Heart left ventricle (tissue), 16 donors: ENCODE measurements at regions of chr4 and their contacts with region 1.

Region 1: GRCh38 chr4:138680989-138681604 is 334.5 kb upstream of the NOCT start:
- DNase-seq: peak; percentile 69 to 83 (median 76)
- ATAC-seq: peak in 3 of 4 donors; percentile 62 to 70 (median 63)
- H3K4me3 ChIP-seq: no peak overlapping the region
- H3K27ac ChIP-seq: no peak overlapping the region
- H3K4me1 ChIP-seq: peaks cover 0 to 16% (median 0%) of the 10 kb centered on the region in 12 donors
- H3K27me3 ChIP-seq: peaks cover 0 to 4% (median 0%) of the 10 kb centered on the region in 9 donors
- CTCF ChIP-seq: peak; percentile 85 to 99 (median 93)
- POLR2A ChIP-seq: no peak

Region 2: DNA sequence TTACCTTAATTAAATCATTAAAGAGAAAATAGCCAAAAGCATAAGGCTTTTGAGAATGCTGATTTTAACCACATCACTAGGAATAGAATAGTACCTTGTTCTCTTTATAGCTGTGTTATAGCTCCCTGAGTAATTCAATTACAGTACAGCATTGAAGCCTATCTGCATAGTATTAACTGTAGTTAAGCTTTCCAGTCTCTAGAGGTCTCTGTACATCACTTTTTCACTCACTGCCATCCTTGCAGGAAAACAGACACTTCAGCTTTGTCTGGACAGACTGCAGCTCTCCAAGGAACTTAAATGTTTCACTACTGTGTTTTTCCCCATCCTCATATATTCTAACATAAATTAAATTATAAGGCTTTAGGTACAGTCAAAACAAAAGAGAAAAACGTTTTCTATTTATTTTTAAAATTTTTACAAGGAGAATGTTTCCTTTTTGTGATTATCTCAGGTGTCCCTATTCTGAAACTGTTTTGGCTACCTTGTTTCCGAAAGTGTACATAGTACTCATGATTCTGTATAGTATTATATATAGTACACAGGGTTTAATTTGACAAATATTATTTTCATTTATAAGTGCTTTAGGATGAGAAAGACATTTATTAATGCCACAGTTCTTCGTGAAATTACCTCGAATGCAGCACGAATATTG is 1556.7 kb before region 1 on chr4:
- intact Hi-C with region 1: loop called in 4 of 10 experiments (anchors 5 to 10 kb)
- DNase-seq: no peak
- ATAC-seq: peak; percentile 80 to 99 (median 89)
- H3K4me3 ChIP-seq: peak overlapping the region in 10 of 12 donors; percentile 5 to 59 (median 40)
- H3K27ac ChIP-seq: no peak overlapping the region
- H3K4me1 ChIP-seq: no peaks in the 10 kb centered on the region
- H3K27me3 ChIP-seq: no peaks in the 10 kb centered on the region
- CTCF ChIP-seq: peak; percentile 33 to 75 (median 63)
- POLR2A ChIP-seq: no peak

Region 3: GRCh38 chr4:138035781-138036258 is 645.3 kb before region 1 on chr4:
- intact Hi-C with region 1: loop called (anchors 1 to 5 kb)
- DNase-seq: no peak
- ATAC-seq: peak; percentile 64 to 94 (median 83)
- H3K4me3 ChIP-seq: no peak overlapping the region
- H3K27ac ChIP-seq: no peak overlapping the region
- H3K4me1 ChIP-seq: peaks cover 0 to 6% (median 0%) of the 10 kb centered on the region in 12 donors
- H3K27me3 ChIP-seq: no peaks in the 10 kb centered on the region
- CTCF ChIP-seq: peak; percentile 36 to 69 (median 60)
- POLR2A ChIP-seq: no peak

Region 4: GRCh38 chr4:138182838-138183426 is 498.2 kb before region 1 on chr4:
- intact Hi-C with region 1: loop called in 9 of 10 experiments (anchors 5 to 10 kb)
- DNase-seq: peak in 1 of 5 donors; percentile 8
- ATAC-seq: peak; percentile 39 to 80 (median 70)
- H3K4me3 ChIP-seq: no peak overlapping the region
- H3K27ac ChIP-seq: no peak overlapping the region
- H3K4me1 ChIP-seq: peaks cover 0 to 18% (median 1%) of the 10 kb centered on the region in 12 donors
- H3K27me3 ChIP-seq: no peaks in the 10 kb centered on the region
- CTCF ChIP-seq: peak; percentile 48 to 81 (median 69)
- POLR2A ChIP-seq: no peak

Region 5: DNA sequence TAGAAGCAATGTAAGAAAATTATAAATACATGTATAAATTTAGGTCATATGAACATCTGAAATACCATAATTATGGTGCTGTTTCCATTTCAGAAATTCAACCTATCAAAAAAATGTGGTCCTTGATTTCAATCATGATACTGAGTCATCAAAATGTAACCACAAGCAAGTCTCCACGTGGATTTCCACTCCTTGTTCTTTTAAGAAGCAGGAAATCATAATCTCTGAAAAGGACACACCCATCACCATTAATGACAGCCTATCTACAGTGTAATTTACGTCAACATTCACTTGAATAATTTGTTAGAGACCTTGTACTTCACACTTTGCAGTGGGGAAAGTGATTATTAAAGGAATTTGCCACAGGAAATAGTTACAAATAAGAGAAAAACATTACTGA is 421.3 kb before region 1 on chr4:
- intact Hi-C with region 1: no loop called
- DNase-seq: no peak
- ATAC-seq: no peak
- H3K4me3 ChIP-seq: no peak overlapping the region
- H3K27ac ChIP-seq: no peak overlapping the region
- H3K4me1 ChIP-seq: no peaks in the 10 kb centered on the region
- H3K27me3 ChIP-seq: no peaks in the 10 kb centered on the region
- CTCF ChIP-seq: no peak
- POLR2A ChIP-seq: no peak

Region 6: GRCh38 chr4:138864961-138865720 is 184.0 kb after region 1 on chr4:
- intact Hi-C with region 1: loop called (anchors 5 to 10 kb)
- DNase-seq: no peak
- ATAC-seq: no peak
- H3K4me3 ChIP-seq: no peak overlapping the region
- H3K27ac ChIP-seq: no peak overlapping the region
- H3K4me1 ChIP-seq: no peaks in the 10 kb centered on the region
- H3K27me3 ChIP-seq: peaks cover 0 to 10% (median 0%) of the 10 kb centered on the region in 9 donors
- CTCF ChIP-seq: no peak
- POLR2A ChIP-seq: no peak

Region 7: DNA sequence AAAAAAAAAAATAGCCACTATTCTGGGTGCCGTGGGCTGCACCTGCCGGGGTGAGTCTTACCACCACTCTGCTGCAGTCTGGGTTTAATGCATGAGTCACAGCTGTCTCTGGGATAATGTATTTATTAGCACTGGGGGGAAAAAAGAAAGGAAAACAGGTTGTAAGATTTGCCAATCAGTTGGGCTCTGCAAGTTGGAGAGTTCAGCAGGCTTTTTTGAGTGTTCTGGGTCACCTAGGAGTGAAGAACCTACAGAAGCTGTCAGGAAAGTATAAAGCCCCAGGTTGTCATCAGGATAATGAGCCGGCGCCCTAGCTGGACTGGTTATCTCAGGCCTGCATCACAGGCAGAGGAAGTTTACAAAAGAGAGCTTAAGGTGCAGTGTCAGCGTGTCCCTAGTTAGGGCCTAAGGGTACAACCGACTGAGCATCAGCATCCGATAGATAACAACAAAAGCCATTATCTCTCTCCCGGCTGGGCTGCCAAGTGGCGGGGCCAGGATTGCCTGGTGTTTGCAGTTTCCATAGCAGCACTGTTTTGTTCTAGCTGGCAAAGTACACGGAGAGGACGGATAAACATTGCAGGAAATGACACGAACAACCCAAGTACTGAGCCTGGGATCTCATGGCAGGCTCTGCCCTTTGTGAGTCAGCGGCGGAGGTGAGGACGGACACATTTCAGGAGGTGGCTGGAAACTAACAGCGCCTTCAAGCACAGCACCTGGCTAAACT is 229.7 kb after region 1 on chr4:
- intact Hi-C with region 1: loop called in 4 of 10 experiments (anchors 5 to 10 kb)
- DNase-seq: peak; percentile 64 to 89 (median 79)
- ATAC-seq: peak; percentile 98 to 99 (median 98)
- H3K4me3 ChIP-seq: peak overlapping the region in 1 of 12 donors; percentile 20
- H3K27ac ChIP-seq: peak overlapping the region in 10 of 12 donors; percentile 1 to 76 (median 56)
- H3K4me1 ChIP-seq: peaks cover 0 to 17% (median 9%) of the 10 kb centered on the region in 12 donors
- H3K27me3 ChIP-seq: no peaks in the 10 kb centered on the region
- CTCF ChIP-seq: no peak
- POLR2A ChIP-seq: peak in 1 of 2 donors; percentile 25